WTC11 (cell line): ENCODE measurements at regions of chr7 and their contacts with region 1.

Region 1: DNA sequence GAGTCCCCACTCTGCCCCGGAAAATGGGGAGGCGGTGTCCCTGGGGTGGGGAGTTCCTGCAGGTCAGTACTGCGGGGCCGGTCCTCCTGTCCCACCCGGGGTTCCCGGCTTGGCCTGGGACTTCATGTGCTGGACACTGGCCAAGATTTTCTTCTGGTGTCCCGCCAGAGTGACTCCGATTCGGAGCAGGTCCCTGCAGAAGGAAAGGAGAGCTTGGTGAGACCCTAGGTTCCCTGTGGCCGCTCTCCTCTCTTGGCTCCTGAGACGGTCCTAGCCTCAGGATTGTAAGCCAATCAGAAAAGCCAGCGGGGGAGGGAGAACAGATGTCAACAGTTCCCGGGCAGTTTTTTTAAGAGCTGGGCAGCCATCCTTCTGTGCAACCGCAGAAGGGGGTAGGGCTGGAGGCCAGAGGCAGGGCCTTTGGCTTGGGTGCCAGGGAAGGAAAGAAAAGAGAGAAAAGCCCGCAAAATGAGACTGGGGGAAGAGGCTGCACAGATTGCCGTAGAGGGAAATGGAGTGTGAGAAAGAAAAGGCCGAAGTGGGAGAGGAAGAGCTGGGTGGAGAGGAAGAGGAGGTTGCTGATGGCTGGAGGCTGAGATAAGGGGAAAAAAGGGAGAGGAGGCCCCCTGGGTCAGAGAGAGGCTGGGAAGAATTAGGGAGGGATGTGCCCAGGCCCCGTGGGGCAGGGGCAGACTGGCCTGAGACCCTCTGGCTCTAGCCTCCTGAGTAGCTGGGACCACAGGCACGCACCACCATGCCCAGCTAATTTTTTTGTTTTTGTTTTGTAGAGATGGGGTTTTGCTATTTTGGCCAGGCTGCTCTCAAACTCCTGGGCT is 23.7 kb downstream of the EPHB4 start:
- DNase-seq: peak; percentile 59
- ATAC-seq: peak; percentile 21
- H3K4me3 Mint-ChIP-seq: no peak overlapping the region
- H3K27ac Mint-ChIP-seq: peak overlapping the region; percentile 83
- H3K4me1 Mint-ChIP-seq: peaks cover 24% of the 10 kb centered on the region
- H3K27me3 Mint-ChIP-seq: no peaks in the 10 kb centered on the region
- CTCF ChIP-seq: no peak

Region 2: DNA sequence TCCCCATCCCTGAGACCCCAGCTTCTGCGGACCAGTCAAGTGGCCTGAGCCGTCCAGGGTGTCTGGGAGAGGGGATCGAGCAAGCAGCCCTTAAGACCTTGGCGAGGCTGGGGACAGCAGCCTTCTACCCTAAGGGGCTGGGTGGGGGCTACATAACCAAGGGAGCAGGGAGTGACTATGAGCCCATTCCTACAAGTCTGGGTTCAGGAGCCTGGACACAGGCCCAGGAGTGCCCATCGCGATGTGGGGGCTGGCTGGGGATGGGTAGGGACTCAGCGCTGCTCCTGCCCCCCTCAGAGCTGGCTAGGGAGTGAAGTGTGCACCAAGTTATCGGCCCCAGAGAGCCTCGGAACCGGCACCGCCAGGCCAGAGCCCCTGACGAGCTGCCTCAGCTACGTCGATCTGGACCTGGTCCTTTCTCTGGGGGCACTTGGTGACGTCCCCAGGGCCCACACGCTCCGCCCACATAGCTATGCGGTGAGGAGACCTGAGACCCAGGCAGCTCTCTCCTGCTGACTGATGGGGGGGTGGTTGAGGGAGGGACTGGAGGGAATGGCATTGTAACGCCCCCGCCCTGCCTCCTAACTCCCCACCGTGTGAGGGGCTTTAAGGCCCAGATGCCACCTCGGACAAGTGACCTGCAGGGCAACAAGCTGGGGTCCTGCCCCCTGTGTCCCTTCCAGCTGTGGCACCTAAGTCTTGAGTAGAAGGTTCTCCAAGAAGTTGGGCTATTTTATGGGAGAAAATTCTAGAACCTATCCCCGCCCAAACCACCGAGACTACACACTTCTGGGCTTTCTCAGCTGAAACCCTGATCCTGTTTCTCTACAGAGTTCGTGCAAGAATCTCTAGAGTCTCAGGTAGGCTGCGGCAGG is 232.4 kb before region 1 on chr7:
- CTCF ChIA-PET with region 1: no interaction called
- POLR2A ChIA-PET with region 1: no interaction called
- DNase-seq: no peak
- ATAC-seq: peak; percentile 2
- H3K4me3 Mint-ChIP-seq: peak overlapping the region; percentile 61
- H3K27ac Mint-ChIP-seq: no peak overlapping the region
- H3K4me1 Mint-ChIP-seq: peaks cover 41% of the 10 kb centered on the region
- H3K27me3 Mint-ChIP-seq: peaks cover 11% of the 10 kb centered on the region
- CTCF ChIP-seq: no peak

Region 3: DNA sequence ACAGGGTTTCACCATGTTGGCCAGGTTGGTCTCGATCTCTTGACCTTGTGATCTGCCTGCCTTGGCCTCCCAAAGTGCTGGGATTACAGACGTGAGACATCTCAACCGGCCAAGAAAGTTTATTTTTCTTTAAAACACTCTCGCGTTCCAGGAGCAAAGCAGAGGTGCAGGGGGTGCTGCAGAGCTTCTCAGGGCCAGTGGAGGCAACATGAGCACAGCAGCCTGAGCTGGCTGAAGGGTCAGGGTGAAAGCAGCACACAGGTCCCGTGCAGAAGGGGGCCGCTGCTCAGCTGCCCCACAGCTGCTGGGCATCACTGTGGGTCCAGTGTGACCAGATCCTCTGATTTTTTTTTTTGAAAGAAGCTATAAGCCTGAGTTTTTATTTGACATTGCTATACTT is 22.4 kb before region 1 on chr7:
- CTCF ChIA-PET with region 1: interaction called, 18 read pairs
- POLR2A ChIA-PET with region 1: interaction called, 6 read pairs
- DNase-seq: no peak
- ATAC-seq: peak; percentile 62
- H3K4me3 Mint-ChIP-seq: no peak overlapping the region
- H3K27ac Mint-ChIP-seq: no peak overlapping the region
- H3K4me1 Mint-ChIP-seq: peaks cover 12% of the 10 kb centered on the region
- H3K27me3 Mint-ChIP-seq: peaks cover 5% of the 10 kb centered on the region; the same call in 1 of the 2 replicates
- CTCF ChIP-seq: no peak

Region 4: GRCh38 chr7:100822212-100823139 is 18.9 kb after region 1 on chr7:
- CTCF ChIA-PET with region 1: interaction called, 96 read pairs
- POLR2A ChIA-PET with region 1: interaction called, 11 read pairs
- DNase-seq: no peak
- ATAC-seq: no peak
- H3K4me3 Mint-ChIP-seq: no peak overlapping the region
- H3K27ac Mint-ChIP-seq: no peak overlapping the region
- H3K4me1 Mint-ChIP-seq: peaks cover 16% of the 10 kb centered on the region
- H3K27me3 Mint-ChIP-seq: no peaks in the 10 kb centered on the region
- CTCF ChIP-seq: no peak

Region 5: DNA sequence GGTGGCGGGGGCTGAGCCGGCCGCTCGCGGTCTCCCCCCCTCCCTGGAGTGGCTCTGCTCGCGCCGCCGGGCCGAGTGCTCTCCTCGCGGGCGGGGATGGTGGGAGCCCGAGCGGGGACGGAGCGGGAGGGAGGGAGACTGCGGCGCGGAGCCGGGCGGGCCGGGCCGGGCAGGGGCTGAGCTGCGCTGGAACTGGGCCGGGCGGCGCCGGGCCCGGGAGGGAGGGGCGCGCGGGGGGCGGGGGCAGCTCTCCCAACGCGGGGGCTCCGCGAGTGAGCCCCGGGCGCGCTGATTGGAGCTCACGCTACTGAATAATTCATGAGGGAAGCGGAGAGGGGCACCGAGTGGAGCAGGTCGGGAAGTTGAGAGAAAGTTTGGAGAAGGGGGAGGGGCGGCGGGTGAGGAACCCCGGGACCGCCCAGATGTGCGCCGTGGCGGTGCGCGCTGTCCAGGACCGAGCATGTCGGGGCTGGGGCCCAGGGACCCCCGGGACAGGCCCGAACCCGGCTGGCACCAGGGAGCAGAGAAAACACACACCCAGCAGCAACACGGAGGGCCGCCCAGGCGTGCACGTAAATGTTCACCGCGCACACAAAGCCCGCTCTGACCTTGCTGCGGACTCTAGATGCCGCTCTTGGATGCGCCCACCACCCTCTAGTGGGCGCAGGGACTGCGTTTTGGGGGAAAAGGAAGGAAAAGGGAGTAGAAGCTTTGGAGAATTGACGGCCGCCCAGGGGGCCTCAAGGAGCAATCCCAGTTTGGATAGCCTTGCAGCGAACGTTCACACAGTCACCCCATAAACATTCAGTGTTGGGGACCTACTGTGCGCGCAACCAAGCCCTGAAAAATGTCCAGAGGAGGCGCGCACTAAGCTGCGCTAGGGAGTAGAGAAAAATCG is 24.0 kb after region 1 on chr7 and contains the start of gene EPHB4:
- CTCF ChIA-PET with region 1: interaction called, 96 read pairs
- POLR2A ChIA-PET with region 1: interaction called, 11 read pairs
- DNase-seq: peak; percentile 90
- ATAC-seq: peak; percentile 82
- H3K4me3 Mint-ChIP-seq: peak within 1 kb of the TSS; percentile 98
- H3K27ac Mint-ChIP-seq: peak within 1 kb of the TSS; percentile 99
- H3K4me1 Mint-ChIP-seq: peaks cover 28% of the 10 kb centered on the region
- H3K27me3 Mint-ChIP-seq: no peaks in the 10 kb centered on the region
- CTCF ChIP-seq: no peak
- total RNA-seq, gene EPHB4: 99.7 to 120 TPM (median 104 TPM) in 3 replicates

Region 6: DNA sequence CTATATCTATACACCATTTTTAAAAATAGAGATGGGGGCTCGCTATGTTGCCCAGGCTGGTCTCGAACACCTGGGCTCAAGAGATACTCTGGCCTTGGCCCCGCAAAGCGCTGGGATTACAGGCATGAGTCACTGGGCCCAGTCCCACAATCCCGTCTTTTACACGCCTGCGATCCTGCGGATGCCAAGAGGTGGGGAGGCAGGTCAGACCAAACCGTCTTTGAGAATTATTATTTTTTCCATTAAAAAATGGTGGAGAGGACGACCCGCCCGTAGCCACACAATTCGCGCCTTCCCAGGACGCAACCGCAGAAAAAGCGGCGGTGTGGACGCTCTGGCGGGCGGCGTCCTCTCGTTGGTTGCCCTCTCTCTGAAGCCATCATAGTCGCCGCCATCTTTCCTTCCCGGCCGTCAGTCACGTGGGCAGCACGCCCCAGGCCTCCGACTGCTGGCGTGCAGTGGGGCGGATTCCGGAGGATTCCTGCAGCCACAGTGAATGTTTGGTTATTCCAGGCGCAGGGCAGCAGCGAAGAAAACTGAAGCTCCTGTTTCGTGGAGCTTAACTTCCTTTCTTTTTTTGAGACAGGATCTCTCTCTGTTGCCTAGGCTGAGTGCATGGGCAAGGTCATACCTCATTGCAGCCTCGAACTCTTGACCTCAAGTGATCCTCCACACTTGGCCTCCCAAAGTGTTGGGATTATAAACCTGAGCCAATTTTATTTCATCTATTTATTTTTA is 33.7 kb after region 1 on chr7:
- CTCF ChIA-PET with region 1: interaction called, 17 read pairs
- POLR2A ChIA-PET with region 1: no interaction called
- DNase-seq: peak; percentile 93
- ATAC-seq: peak; percentile 36
- H3K4me3 Mint-ChIP-seq: peak overlapping the region; percentile 77
- H3K27ac Mint-ChIP-seq: peak overlapping the region; percentile 100
- H3K4me1 Mint-ChIP-seq: peaks cover 37% of the 10 kb centered on the region
- H3K27me3 Mint-ChIP-seq: no peaks in the 10 kb centered on the region
- CTCF ChIP-seq: no peak

Region 7: GRCh38 chr7:100874577-100875355 is 71.2 kb after region 1 on chr7 and contains the start of gene SRRT:
- CTCF ChIA-PET with region 1: interaction called, 14 read pairs
- POLR2A ChIA-PET with region 1: interaction called, 4 read pairs
- DNase-seq: peak; percentile 98
- ATAC-seq: peak; percentile 94
- H3K4me3 Mint-ChIP-seq: peak within 1 kb of the TSS; percentile 98
- H3K27ac Mint-ChIP-seq: peak within 1 kb of the TSS; percentile 99
- H3K4me1 Mint-ChIP-seq: peaks cover 19% of the 10 kb centered on the region
- H3K27me3 Mint-ChIP-seq: no peaks in the 10 kb centered on the region
- CTCF ChIP-seq: no peak
- total RNA-seq, gene SRRT: 209 to 238 TPM (median 233 TPM) in 3 replicates

Region 8: GRCh38 chr7:100933735-100934134 is 130.1 kb after region 1 on chr7:
- CTCF ChIA-PET with region 1: no interaction called
- POLR2A ChIA-PET with region 1: no interaction called
- DNase-seq: peak; percentile 54
- ATAC-seq: peak; percentile 85
- H3K4me3 Mint-ChIP-seq: no peak overlapping the region
- H3K27ac Mint-ChIP-seq: no peak overlapping the region
- H3K4me1 Mint-ChIP-seq: peaks cover 22% of the 10 kb centered on the region
- H3K27me3 Mint-ChIP-seq: no peaks in the 10 kb centered on the region; the same call in none of the 2 replicates
- CTCF ChIP-seq: no peak